Naive thymus-derived CD4-positive, alpha-beta T cell (primary cell): ENCODE measurements at regions of chr3 and their contacts with region 1.

Region 1: DNA sequence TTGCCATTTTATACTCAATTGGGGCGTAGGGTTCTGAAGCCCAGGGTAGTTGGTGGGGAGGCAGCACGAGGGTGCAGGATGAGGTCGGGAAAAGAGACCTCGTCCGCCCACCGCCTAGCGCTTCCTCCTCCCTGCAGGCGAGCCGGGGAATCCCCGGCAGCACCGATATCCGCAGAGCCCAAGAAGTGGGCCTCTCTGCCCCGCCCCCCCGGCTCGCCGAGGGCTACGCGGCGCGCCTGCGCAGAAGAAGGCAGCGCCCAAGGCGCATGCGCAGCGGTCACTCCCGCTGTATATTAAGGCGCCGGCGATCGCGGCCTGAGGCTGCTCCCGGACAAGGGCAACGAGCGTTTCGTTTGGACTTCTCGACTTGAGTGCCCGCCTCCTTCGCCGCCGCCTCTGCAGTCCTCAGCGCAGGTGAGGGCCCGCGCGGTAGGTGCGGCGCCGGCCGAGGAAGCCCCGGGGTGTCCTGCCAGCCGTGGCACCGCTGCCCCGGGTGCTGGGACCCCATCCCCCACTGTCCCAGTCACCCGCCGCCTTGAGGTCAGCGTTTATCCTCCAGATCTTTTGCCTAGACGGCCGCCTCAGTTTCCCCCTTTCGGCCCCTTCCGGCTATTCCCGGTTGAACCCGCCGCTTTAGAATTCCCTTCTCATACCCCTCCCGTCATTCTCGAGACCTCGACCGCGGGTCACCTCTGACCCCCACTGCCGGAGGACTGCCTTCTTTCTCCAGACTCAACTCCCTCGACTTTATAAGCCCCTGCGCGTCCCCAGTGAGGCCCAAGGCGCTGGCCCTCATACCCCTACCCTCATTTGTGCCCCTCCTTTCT is at the start of gene ALAS1:
- DNase-seq: peak; percentile 86 to 99 (median 94)
- ATAC-seq: peak; percentile 97
- H3K4me3 ChIP-seq: peak within 1 kb of the TSS; percentile 80
- H3K4me3 Mint-ChIP-seq: peak within 1 kb of the TSS; percentile 85 to 98 (median 96)
- H3K27ac ChIP-seq: peak within 1 kb of the TSS; percentile 94
- H3K27ac Mint-ChIP-seq: peak within 1 kb of the TSS; percentile 88 to 98 (median 94)
- H3K4me1 ChIP-seq: peaks cover 25 to 30% of the 10 kb centered on the region in 2 donors
- H3K4me1 Mint-ChIP-seq: peaks cover 33 to 56% (median 49%) of the 10 kb centered on the region in 7 donors
- H3K27me3 ChIP-seq: no peaks in the 10 kb centered on the region
- H3K27me3 Mint-ChIP-seq: no peaks in the 10 kb centered on the region
- total RNA-seq, gene ALAS1: 12.6 to 74.3 (median 27.4) TPM

Region 2: GRCh38 chr3:51974963-51975851 is 222.8 kb before region 1 on chr3 and contains the start of gene ABHD14A:
- CTCF ChIA-PET with region 1: no interaction called
- POLR2A ChIA-PET with region 1: interaction called, 3 read pairs
- intact Hi-C with region 1: loop called in 1 of 2 experiments (anchors 5 kb)
- DNase-seq: peak; percentile 68 to 85 (median 73)
- ATAC-seq: peak; percentile 80
- H3K4me3 ChIP-seq: peak within 1 kb of the TSS; percentile 82
- H3K4me3 Mint-ChIP-seq: peak within 1 kb of the TSS; percentile 83 to 100 (median 94)
- H3K27ac ChIP-seq: peak within 1 kb of the TSS; percentile 77
- H3K27ac Mint-ChIP-seq: peak within 1 kb of the TSS; percentile 88 to 97 (median 92)
- H3K4me1 ChIP-seq: peaks cover 9 to 21% of the 10 kb centered on the region in 2 donors
- H3K4me1 Mint-ChIP-seq: peaks cover 26 to 53% (median 32%) of the 10 kb centered on the region in 7 donors
- H3K27me3 ChIP-seq: no peaks in the 10 kb centered on the region
- H3K27me3 Mint-ChIP-seq: no peaks in the 10 kb centered on the region
- total RNA-seq, gene ABHD14A: 9.9 to 23.7 (median 14.7) TPM

Region 3: DNA sequence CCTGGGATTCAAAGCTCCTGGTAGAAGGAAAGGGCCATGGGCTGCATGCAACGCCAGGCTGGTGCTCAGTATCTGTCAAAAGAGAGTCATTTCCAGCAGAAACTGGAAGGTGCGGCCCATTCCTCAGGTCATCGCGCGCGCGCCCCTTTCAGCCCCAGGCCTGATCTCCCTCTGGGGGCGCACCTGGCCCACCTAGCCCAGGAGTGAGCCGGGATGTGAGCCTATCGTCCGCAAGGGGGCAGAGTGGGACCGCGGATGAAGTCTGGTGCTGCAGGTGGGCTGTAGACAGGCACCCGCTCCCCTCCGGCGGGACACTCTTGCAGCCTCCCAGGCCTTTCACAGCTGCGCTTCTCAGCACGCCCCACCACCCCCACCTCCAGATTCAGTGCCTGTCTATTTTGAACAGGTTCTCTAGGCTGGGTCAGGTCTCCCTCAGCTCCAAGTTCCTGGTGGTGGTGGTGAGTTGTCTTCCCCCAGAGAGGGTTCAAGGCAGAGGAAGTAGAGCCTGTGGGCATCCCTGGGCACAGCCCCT is 196.5 kb before region 1 on chr3:
- CTCF ChIA-PET with region 1: no interaction called
- POLR2A ChIA-PET with region 1: interaction called, 3 read pairs
- intact Hi-C with region 1: loop called (anchors 5 kb)
- DNase-seq: peak; percentile 73 to 86 (median 81)
- ATAC-seq: peak; percentile 98
- H3K4me3 ChIP-seq: no peak overlapping the region
- H3K4me3 Mint-ChIP-seq: peak overlapping the region in 2 of 10 donors; percentile 12 to 16
- H3K27ac ChIP-seq: no peak overlapping the region
- H3K27ac Mint-ChIP-seq: peak overlapping the region in 3 of 9 donors; percentile 8 to 41 (median 11)
- H3K4me1 ChIP-seq: peaks cover 6 to 22% of the 10 kb centered on the region in 2 donors
- H3K4me1 Mint-ChIP-seq: peaks cover 6 to 24% (median 16%) of the 10 kb centered on the region in 7 donors
- H3K27me3 ChIP-seq: no peaks in the 10 kb centered on the region
- H3K27me3 Mint-ChIP-seq: peaks cover 0 to 16% (median 0%) of the 10 kb centered on the region in 5 donors

Region 4: GRCh38 chr3:52123106-52123725 is 74.8 kb before region 1 on chr3:
- CTCF ChIA-PET with region 1: no interaction called
- POLR2A ChIA-PET with region 1: no interaction called
- intact Hi-C with region 1: no loop called
- DNase-seq: peak; percentile 51 to 84 (median 70)
- ATAC-seq: peak; percentile 86
- H3K4me3 ChIP-seq: no peak overlapping the region
- H3K4me3 Mint-ChIP-seq: no peak overlapping the region
- H3K27ac ChIP-seq: no peak overlapping the region
- H3K27ac Mint-ChIP-seq: no peak overlapping the region
- H3K4me1 ChIP-seq: no peaks in the 10 kb centered on the region
- H3K4me1 Mint-ChIP-seq: peaks cover 0 to 28% (median 0%) of the 10 kb centered on the region in 7 donors
- H3K27me3 ChIP-seq: no peaks in the 10 kb centered on the region
- H3K27me3 Mint-ChIP-seq: no peaks in the 10 kb centered on the region

Region 5: DNA sequence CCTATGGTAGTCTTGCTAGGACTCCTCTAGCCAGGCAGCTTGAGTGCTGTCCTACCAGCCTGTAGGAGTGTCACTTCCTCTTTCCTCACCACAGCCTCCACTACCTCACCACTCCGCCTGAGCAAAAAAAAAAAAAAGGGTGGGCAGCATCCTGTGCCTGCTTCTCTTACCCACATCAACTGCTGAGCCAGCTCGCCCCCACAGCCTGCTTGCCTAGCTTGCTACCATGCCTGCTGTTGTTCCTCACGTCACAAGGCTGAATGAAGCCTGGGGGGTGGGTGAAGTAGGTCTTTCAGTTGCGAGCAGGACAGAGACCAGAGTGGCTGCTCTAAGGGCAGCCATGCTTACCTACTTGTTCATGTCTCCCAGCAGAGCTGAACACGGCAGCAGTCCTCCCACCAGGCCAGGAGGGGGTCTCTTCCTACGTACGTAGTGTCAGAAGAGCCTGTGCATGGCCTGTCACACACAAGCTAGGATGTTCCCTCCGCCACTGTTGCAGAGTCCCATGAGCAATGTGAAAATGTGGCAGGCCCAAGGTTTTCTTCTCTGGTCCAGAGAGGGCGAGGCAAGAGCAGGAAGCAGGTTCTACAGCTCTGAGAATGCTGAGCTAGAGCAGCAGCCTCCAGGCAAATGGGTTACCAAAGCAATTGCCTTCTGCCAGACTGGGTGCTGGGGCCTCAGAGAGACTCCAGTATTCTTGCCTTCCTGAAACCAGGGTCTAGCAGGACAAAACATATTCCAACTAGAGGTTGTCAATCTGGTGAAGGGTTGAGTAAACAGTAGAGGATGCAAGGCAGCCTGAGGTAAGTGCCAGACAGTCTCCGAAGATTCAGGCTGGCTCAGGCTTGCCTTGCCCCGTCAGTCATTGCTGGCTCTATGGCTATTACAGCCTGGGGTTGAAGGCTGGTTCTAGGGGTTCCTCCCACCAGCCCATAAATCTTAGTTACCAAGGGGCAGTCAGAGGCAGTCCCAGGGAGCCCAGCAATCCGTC is 55.6 kb after region 1 on chr3:
- CTCF ChIA-PET with region 1: no interaction called
- POLR2A ChIA-PET with region 1: no interaction called
- intact Hi-C with region 1: no loop called
- DNase-seq: peak in 8 of 9 donors; percentile 81 to 95 (median 94)
- ATAC-seq: peak; percentile 95
- H3K4me3 ChIP-seq: peak overlapping the region; percentile 38
- H3K4me3 Mint-ChIP-seq: peak overlapping the region; percentile 82 to 97 (median 86)
- H3K27ac ChIP-seq: peak overlapping the region; percentile 87
- H3K27ac Mint-ChIP-seq: peak overlapping the region; percentile 92 to 100 (median 98)
- H3K4me1 ChIP-seq: peaks cover 55 to 91% of the 10 kb centered on the region in 2 donors
- H3K4me1 Mint-ChIP-seq: peaks cover 46 to 99% (median 92%) of the 10 kb centered on the region in 7 donors
- H3K27me3 ChIP-seq: no peaks in the 10 kb centered on the region
- H3K27me3 Mint-ChIP-seq: peaks cover 0 to 4% (median 0%) of the 10 kb centered on the region in 5 donors